GM10248 (cell line): ENCODE measurements at regions of chr7 and their contacts with region 1.

Region 1: DNA sequence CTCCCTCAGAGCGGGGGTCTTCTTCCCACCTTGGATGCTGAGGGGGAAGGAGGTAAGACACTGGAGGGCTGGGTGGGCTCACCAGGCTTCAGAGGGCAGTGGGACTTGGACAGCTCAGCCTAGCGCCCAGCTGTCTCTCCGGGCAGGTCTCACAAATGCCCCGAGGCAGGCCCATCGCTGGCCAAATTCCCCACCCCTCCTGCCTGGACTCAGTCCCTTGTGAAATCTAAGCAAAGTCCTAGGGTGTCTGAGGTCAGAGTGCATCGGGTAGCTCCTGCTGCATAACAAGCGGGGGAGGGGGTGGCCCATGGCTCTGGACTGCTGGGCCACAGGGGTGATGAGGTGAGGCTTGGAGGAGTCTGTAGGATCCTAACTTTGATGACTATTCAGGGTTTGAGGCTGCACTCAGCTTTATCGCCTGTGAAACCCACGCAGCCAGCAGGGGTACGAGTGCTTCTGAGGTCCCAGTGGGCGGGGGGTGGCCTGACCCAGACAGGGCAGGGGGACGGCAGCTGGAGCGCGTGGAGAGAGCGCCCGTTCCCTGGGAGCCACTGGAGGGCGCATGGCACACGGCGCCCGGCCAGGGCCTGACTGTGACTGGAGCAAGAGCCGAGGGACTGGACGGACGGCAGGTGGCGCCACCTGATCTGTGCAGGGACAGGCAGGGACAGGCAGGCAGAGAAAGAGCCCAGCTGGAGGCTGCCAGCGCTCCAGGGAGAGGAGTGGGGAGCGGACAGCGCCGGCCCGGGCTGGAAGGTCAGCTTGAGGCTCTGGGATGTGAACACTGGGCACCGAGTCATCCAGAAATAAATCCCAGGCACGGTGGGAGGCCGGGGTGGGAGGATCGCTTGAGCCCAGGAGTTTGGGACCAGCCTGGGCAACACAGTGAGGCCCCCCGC is 10.0 kb downstream of the CYP2W1 start:
- DNase-seq: peak; percentile 91
- CTCF ChIP-seq: peak; percentile 100

Region 2: DNA sequence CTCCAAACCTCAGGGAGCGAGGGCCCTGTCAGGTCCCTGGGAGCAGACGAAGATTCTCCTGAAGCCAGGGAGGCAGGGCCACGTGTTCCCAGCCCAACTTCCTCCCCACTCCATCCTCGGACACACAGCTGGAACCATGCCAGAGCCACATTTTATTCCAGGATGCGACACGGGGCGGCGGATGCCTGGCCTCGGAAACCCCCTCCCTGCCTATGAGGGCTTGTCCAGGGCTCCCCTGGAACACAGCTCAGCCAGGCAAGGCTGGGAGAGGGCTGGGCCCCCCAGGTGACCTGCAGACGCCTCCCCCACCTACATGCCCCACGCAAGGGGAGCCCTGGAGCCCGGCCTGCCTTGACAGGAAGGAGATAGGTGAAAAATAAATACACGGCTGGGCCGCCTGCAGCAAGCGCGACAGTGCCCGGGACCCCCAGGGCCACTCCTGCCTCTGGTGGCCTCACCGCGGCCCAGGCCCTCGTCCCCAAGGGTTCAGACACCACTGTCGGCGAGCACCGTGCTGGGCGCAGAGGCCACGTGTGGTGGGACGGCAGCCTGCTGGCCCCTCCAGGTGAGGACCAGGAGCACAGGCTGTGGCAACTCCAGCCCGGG is 95.1 kb before region 1 on chr7:
- CTCF ChIA-PET with region 1: no interaction called
- POLR2A ChIA-PET with region 1: no interaction called
- DNase-seq: no peak
- CTCF ChIP-seq: no peak

Region 3: GRCh38 chr7:957418-958220 is 35.3 kb before region 1 on chr7:
- CTCF ChIA-PET with region 1: interaction called, 12 read pairs
- POLR2A ChIA-PET with region 1: no interaction called
- DNase-seq: no peak
- CTCF ChIP-seq: no peak

Region 4: DNA sequence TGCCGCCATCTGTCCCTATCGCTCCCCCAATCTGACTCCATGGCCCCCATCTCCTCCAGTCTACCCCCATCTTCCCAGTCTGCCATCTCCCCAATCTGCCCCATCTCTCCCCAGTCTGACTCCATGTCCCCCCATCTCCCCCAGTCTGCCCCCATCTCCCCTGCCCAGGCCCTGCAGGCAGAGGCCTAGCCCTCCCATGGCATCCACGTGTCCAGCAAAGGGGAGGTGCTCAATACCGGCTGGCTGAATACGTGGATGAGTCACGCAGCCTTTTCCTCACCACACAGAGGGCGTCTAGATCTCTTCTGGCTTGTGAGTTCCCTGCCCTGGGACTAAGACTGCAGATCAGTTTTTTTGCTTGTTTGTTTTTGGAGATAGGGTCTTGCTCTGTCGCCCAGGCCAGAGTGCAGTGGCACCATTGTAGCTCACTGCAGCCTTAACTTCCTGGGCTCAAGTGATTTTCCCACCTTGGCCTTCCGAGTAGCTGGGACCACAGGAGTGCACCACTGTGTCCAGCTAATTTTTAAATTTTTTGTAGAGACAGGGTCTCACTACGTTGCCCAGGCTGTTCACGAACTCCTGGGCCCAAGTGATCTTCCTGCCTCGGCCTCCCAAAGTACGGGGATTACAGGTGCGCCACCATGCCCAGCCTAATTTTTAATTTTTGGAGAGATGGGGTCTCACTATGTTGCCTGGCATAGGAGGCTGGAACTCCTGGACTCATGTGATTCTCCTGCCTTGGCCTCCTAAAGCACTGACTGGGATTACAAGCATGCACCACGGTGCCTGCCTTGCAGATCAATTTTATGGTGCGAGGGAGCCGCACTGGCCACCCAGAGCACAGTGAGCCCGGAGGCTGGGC is 36.0 kb after region 1 on chr7:
- CTCF ChIA-PET with region 1: interaction called, 90 read pairs
- POLR2A ChIA-PET with region 1: no interaction called
- DNase-seq: peak; percentile 83
- CTCF ChIP-seq: no peak

Region 5: DNA sequence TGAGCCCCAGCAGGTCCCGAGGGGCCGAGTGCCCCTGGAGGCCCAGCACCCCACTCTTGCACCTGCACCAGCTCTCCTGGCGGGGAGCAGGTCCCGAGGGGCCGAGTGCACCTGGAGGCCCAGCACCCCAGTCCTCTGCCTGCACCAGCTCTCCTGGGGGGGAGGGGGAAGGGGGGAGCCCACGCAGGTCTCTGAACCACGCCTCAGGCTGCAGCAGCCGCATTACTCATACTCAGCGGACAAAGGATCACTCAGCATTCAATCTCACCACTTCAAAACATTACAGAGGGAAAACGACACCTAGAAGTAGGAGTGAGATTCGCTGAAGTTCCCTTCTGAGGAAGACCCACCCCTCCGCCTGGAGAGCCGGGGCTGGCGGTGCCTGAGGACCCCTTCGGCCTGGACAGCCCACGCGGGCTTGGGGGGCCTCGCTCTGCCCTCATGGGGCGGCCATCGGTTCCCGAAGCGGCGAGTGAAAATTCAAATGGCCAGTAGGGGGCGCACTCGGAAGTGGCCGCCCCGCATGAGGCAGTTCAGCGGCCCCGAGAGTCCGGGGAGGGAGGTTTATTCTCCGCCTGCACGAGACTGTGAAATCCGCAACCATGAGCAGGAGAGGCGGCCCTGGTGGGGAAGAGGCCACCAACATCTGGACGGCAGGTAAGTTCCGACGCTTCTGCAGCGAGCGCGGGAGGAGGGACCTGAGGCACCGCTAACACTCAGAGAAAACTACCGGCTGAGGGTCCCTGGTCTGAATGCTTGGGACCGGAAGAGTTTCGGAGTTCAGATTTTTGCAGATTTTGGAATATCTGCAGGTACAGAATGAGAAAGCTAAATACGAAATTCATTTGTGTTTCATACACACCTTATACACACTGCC is 93.9 kb after region 1 on chr7:
- CTCF ChIA-PET with region 1: interaction called, 26 read pairs
- POLR2A ChIA-PET with region 1: no interaction called
- DNase-seq: peak; percentile 90
- CTCF ChIP-seq: peak; percentile 85

Region 6: GRCh38 chr7:1149351-1149794 is 156.4 kb after region 1 on chr7:
- CTCF ChIA-PET with region 1: interaction called, 17 read pairs
- POLR2A ChIA-PET with region 1: no interaction called
- DNase-seq: no peak
- CTCF ChIP-seq: no peak

Region 7: DNA sequence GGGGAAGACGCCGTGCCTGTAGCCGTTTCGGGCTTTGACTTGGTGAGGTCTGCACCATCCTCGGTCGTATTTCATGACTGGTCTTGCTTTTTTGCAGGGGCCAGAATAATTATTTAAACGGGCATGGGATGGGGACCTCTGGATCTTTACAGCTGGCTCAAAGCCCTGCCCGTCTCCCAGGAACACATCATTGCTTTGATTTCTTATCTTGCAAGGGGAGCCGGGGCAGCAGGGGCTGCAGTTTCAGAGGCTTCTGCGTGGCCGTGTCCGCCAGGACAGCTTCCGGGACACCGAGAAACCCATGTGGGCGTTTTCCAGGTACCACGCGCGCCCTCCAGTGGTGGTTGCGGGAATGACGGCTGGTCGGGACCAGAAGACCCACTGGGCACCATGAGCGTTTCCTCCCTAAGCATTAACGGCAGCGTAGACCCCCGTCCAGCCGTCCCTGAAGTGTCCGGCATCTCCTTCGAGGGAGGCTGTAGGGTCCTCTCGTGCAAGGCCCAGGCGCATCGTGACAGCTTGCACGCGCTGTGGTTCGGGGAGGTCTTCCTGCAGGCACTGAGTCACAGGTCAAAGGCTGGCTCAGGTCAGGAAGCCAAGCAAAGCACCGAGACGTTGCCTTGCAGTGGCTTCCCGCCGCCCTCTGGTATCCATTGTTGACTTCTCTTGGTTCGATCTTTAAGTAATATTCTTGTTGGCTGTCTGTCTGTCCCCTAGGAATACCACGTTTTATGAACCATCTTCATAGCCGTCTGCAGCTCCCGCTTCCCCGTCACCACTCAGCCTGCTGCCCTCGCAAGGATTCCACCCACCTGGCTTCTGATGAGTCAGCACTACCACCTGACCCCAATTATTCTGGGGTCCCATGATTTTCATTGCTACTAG is 183.3 kb after region 1 on chr7:
- CTCF ChIA-PET with region 1: interaction called, 170 read pairs
- POLR2A ChIA-PET with region 1: no interaction called
- DNase-seq: peak; percentile 86
- CTCF ChIP-seq: peak; percentile 92

Region 8: DNA sequence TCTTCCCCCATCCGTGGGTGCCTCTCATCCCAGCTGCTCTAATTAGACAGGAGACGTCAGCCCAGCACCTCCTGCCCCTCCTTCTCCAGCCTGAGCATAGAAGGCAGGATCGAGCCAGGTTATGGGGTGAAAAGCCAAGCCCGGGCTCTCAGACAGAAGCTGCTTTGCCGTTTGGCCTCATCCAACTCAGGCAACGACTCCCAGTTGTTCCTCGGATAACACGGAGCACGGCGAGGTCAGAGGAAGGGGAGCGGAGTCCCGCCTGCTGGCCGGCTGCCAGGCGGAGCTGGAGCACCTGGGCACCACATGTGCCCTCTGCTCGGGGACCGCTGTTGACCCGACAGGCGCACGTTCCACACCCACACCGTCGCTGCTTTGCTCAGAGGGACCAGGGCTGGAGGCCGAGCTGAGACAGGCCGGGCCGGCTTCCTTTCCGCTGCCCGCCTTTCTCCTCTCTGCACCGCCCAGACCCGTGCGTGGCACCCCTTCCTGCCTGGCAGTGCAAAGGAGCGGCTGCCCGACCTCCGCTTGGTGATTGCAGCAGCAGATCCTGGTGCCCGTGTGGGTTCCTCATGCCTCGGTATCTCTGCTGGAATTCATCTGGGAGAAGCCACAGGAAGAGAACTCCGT is 218.1 kb after region 1 on chr7:
- CTCF ChIA-PET with region 1: no interaction called
- POLR2A ChIA-PET with region 1: no interaction called
- DNase-seq: no peak
- CTCF ChIP-seq: no peak